Thyroid gland (tissue), 4 donors: ENCODE measurements at regions of chr22 and their contacts with region 1.

Region 1: DNA sequence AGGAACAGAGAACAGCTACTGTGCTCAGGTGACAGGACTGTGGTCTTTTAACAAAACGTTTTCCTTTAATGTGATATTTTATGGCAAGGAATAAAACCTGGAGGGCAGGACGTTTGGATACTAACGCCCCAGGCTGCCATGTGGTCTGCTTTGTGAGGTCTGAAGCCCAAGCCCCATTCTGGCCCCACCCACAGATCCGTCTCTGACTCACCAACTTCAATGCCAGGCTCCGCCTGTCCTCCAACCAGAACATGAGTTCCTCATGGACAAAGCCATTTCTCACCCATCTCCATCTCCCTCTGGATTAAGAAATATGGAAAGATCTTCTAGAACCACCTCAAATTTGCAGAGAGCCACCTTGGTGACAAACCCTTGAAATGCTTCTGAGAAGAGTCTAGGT is 148.8 kb downstream of the CRYBB2 start:
- DNase-seq: no peak
- H3K4me3 ChIP-seq: no peak overlapping the region
- H3K27ac ChIP-seq: no peak overlapping the region
- H3K4me1 ChIP-seq: peaks cover 8 to 28% of the 10 kb centered on the region in 2 donors
- H3K27me3 ChIP-seq: no peaks in the 10 kb centered on the region
- CTCF ChIP-seq: no peak
- POLR2A ChIP-seq: no peak

Region 2: DNA sequence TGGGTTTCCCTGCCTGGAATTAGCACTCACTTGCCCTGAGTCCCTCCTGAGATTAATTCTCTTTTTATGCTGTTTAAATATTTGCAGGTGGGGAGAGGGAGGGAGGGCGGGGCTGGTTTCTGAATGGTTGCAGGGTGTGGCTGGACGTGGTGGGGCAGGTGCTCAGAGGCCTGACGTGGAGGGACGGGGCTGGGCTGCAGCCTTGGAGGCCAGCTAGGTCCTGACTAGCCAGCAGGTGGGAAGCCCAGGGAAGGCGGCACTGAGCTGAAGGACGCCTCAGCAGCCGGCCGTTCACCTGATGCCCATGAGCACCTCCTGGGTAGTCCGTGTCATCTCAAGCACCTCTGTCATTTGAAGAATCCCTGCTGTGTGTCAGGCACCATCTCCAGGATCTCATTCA is 541.0 kb before region 1 on chr22:
- intact Hi-C with region 1: no loop called
- DNase-seq: no peak
- H3K4me3 ChIP-seq: no peak overlapping the region
- H3K27ac ChIP-seq: no peak overlapping the region
- H3K4me1 ChIP-seq: no peaks in the 10 kb centered on the region
- H3K27me3 ChIP-seq: no peaks in the 10 kb centered on the region
- CTCF ChIP-seq: no peak
- POLR2A ChIP-seq: no peak

Region 3: GRCh38 chr22:25318081-25318823 is 50.0 kb before region 1 on chr22:
- intact Hi-C with region 1: no loop called
- DNase-seq: no peak
- H3K4me3 ChIP-seq: no peak overlapping the region
- H3K27ac ChIP-seq: no peak overlapping the region
- H3K4me1 ChIP-seq: no peaks in the 10 kb centered on the region
- H3K27me3 ChIP-seq: no peaks in the 10 kb centered on the region
- CTCF ChIP-seq: no peak
- POLR2A ChIP-seq: no peak

Region 4: GRCh38 chr22:25410849-25411248 is 42.6 kb after region 1 on chr22:
- intact Hi-C with region 1: loop called (anchors 5 kb)
- DNase-seq: no peak
- H3K4me3 ChIP-seq: no peak overlapping the region
- H3K27ac ChIP-seq: peak overlapping the region in 1 of 3 donors; percentile 10
- H3K4me1 ChIP-seq: peaks cover 1 to 19% of the 10 kb centered on the region in 2 donors
- H3K27me3 ChIP-seq: no peaks in the 10 kb centered on the region
- CTCF ChIP-seq: no peak
- POLR2A ChIP-seq: no peak